Panc1 (cell line): ENCODE measurements at regions of chr16 and their contacts with region 1.

Region 1: DNA sequence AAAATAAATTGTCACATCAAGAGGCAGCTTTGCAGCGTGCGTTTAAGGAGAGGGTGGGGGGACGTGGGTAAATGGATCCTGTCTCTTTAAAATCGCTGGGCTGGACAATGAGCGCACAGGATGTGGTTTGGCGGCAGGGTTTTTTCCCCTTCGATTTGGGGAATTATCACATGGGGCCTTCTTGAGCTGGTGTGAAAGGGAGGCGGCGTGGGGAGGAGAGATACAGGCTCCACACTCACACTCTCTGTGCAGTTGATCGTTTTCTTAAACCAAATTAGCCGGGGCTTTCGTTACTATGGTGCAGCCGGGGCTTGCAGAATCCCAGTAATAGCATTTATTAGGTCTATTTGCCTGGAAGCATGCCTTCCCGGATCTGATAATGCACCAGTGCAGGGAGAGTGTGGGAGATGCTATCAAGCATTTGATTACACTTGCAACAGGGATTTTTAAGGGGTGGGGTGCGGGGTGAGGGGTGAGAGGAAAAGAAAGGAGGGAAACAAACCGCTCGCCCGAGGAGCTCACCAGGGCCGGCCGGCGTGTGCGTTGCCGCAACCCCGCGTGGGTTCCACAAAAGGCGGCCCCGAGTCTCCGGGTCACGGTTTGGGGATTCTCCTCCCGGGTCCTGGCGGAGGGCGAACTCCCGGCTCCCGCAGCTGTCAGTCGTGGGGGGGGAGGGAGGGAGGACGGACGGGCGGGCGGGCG is 58.9 kb upstream of the GSE1 start:
- DNase-seq: no peak
- ATAC-seq: peak; percentile 64
- H3K4me3 ChIP-seq: peak overlapping the region; percentile 73 to 86
- H3K27ac ChIP-seq: peak overlapping the region; percentile 91
- H3K4me1 ChIP-seq: peaks cover 28% of the 10 kb centered on the region
- H3K27me3 ChIP-seq: no peaks in the 10 kb centered on the region
- CTCF ChIP-seq: no peak

Region 2: GRCh38 chr16:84785843-84786581 is 768.3 kb before region 1 on chr16:
- CTCF ChIA-PET with region 1: no interaction called
- POLR2A ChIA-PET with region 1: interaction called, 11 read pairs
- in situ Hi-C with region 1: no loop called
- intact Hi-C with region 1: no loop called
- DNase-seq: no peak
- ATAC-seq: no peak
- H3K4me3 ChIP-seq: no peak overlapping the region
- H3K27ac ChIP-seq: no peak overlapping the region
- H3K4me1 ChIP-seq: peaks cover 5% of the 10 kb centered on the region; the same call in 1 of the 2 replicates
- H3K27me3 ChIP-seq: no peaks in the 10 kb centered on the region
- CTCF ChIP-seq: no peak

Region 3: GRCh38 chr16:85360323-85361277 is 193.7 kb before region 1 on chr16:
- CTCF ChIA-PET with region 1: no interaction called
- POLR2A ChIA-PET with region 1: no interaction called
- in situ Hi-C with region 1: no loop called
- intact Hi-C with region 1: no loop called
- DNase-seq: no peak
- ATAC-seq: no peak
- H3K4me3 ChIP-seq: no peak overlapping the region
- H3K27ac ChIP-seq: no peak overlapping the region; the same call in 1 of the 2 replicates
- H3K4me1 ChIP-seq: peaks cover 5% of the 10 kb centered on the region
- H3K27me3 ChIP-seq: no peaks in the 10 kb centered on the region
- CTCF ChIP-seq: no peak

Region 4: DNA sequence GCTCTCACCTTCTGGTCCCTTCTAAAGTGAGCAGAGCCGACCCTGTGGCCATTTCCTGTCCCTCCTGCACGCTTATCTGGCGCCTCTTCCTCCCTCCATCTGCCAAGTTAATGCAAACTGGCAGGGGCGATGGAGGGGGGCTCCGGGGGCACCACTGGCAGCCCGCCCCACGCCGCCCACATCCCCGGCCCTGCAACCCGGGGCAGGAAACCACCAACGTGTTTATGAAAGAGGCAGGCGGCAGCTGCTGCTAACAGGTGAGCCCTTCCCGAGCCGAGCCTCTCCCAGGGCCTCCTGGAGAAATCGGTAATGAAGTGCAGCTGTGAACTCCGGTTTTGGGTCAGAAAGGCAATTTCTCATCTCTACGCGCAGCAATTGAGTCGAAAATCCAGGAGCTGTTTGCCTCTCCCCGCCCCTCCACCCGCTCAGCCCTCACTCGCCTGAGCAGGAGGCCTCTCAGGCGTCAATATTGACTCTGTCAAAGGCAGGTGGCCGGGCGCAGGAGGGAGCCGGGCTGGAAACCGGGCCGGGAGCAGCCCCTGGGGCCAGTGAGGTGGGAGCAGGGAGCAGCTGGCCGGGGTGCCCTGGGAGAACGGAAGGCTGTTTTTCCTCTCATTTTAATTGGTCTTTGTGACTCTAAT is 105.6 kb before region 1 on chr16:
- CTCF ChIA-PET with region 1: interaction called, 12 read pairs
- POLR2A ChIA-PET with region 1: interaction called, 3 read pairs
- in situ Hi-C with region 1: no loop called
- intact Hi-C with region 1: loop called (anchors 10 kb)
- DNase-seq: no peak
- ATAC-seq: no peak
- H3K4me3 ChIP-seq: no peak overlapping the region
- H3K27ac ChIP-seq: no peak overlapping the region
- H3K4me1 ChIP-seq: peaks cover 21% of the 10 kb centered on the region
- H3K27me3 ChIP-seq: no peaks in the 10 kb centered on the region
- CTCF ChIP-seq: no peak

Region 5: GRCh38 chr16:85610508-85611332 is 56.5 kb after region 1 on chr16:
- CTCF ChIA-PET with region 1: interaction called, 10 read pairs
- POLR2A ChIA-PET with region 1: interaction called, 15 read pairs
- in situ Hi-C with region 1: no loop called
- intact Hi-C with region 1: loop called (anchors 5 kb)
- DNase-seq: peak; percentile 67
- ATAC-seq: peak; percentile 52
- H3K4me3 ChIP-seq: peak overlapping the region; percentile 60 to 63
- H3K27ac ChIP-seq: peak overlapping the region; percentile 84
- H3K4me1 ChIP-seq: peaks cover 44% of the 10 kb centered on the region
- H3K27me3 ChIP-seq: no peaks in the 10 kb centered on the region
- CTCF ChIP-seq: peak; percentile 92

Region 6: GRCh38 chr16:85615852-85616606 is 61.8 kb after region 1 on chr16:
- CTCF ChIA-PET with region 1: interaction called, 10 read pairs
- POLR2A ChIA-PET with region 1: interaction called, 15 read pairs
- in situ Hi-C with region 1: no loop called
- intact Hi-C with region 1: loop called (anchors 5 kb)
- DNase-seq: no peak
- ATAC-seq: 0 out of 2 replicates have a peak, but pooled peaks have one; percentile 5
- H3K4me3 ChIP-seq: peak overlapping the region; percentile 56 to 63
- H3K27ac ChIP-seq: peak overlapping the region; percentile 88
- H3K4me1 ChIP-seq: peaks cover 33% of the 10 kb centered on the region
- H3K27me3 ChIP-seq: no peaks in the 10 kb centered on the region
- CTCF ChIP-seq: peak; percentile 89

Region 7: GRCh38 chr16:85789773-85790172 is 235.5 kb after region 1 on chr16:
- CTCF ChIA-PET with region 1: no interaction called
- POLR2A ChIA-PET with region 1: no interaction called
- in situ Hi-C with region 1: no loop called
- intact Hi-C with region 1: no loop called
- DNase-seq: no peak
- ATAC-seq: no peak
- H3K4me3 ChIP-seq: no peak overlapping the region
- H3K27ac ChIP-seq: no peak overlapping the region
- H3K4me1 ChIP-seq: no peaks in the 10 kb centered on the region
- H3K27me3 ChIP-seq: no peaks in the 10 kb centered on the region
- CTCF ChIP-seq: no peak